CD14-positive monocyte (primary cell): ENCODE measurements at regions of chr19 and their contacts with region 1.

Region 1: GRCh38 chr19:2061495-2062381 is 10.7 kb upstream of the MKNK2 start:
- DNase-seq: peak; percentile 98 to 99 (median 98)
- H3K4me3 ChIP-seq: peak overlapping the region; percentile 54 to 77 (median 74)
- H3K4me3 Mint-ChIP-seq: peak overlapping the region; percentile 82 to 90
- H3K27ac ChIP-seq: peak overlapping the region; percentile 63 to 92
- H3K27ac Mint-ChIP-seq: peak overlapping the region; percentile 88 to 98 (median 94)
- H3K4me1 ChIP-seq: peaks cover 36 to 40% of the 10 kb centered on the region in 2 donors
- H3K4me1 Mint-ChIP-seq: peaks cover 27% of the 10 kb centered on the region
- H3K27me3 ChIP-seq: no peaks in the 10 kb centered on the region
- H3K27me3 Mint-ChIP-seq: peaks cover 0 to 1% (median 0%) of the 10 kb centered on the region in 3 donors
- CTCF ChIP-seq: no peak

Region 2: DNA sequence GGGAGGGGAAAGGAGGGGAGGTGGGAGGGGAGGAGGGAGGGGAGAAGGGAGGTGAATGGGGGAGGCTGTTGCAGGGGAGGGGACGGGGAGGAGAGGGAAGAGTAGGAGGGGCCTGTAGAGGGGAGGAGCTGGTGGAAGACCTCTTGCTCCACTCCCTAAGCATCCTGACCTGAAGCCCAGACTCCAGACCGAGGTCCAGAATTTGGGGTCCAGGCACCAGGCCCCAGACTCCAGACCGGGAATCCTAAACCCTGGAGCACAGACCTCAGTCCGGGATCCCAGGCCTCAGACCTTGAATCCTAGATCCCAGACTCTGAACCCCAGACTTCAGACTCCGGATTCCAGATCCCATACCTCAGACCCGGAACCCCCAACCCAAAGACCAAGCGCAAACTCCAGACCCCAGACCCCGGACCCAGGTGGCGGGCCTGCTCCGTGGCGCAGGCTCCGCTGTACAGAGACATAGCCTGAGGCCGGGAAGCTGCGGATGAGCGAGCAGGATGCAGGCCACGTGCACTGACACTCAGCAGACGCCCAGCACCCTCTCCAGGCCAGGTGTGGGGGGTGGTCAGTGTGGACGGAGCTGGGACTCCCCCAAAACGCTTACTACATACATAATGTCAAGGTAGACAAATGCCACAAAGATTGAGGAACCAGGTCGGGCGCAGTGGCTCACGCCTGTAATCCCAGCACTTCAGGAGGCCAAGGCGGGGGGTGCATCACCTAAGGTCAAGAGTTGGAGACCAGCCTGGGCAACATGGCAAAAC is 45.5 kb before region 1 on chr19:
- intact Hi-C with region 1: loop called in 1 of 2 experiments (anchors 5 kb)
- DNase-seq: peak; percentile 12 to 46 (median 36)
- H3K4me3 ChIP-seq: peak overlapping the region in 1 of 3 experiments; percentile 55
- H3K4me3 Mint-ChIP-seq: peak overlapping the region; percentile 46 to 48
- H3K27ac ChIP-seq: no peak overlapping the region
- H3K27ac Mint-ChIP-seq: peak overlapping the region in 2 of 7 donors; percentile 66 to 76
- H3K4me1 ChIP-seq: peaks cover 15 to 22% of the 10 kb centered on the region in 2 donors
- H3K4me1 Mint-ChIP-seq: peaks cover 18% of the 10 kb centered on the region
- H3K27me3 ChIP-seq: no peaks in the 10 kb centered on the region
- H3K27me3 Mint-ChIP-seq: peaks cover 0 to 3% (median 0%) of the 10 kb centered on the region in 3 donors
- CTCF ChIP-seq: no peak

Region 3: GRCh38 chr19:2032296-2032941 is 29.3 kb before region 1 on chr19:
- intact Hi-C with region 1: loop called in 1 of 2 experiments (anchors 5 kb)
- DNase-seq: peak; percentile 74 to 81 (median 78)
- H3K4me3 ChIP-seq: peak overlapping the region; percentile 20 to 65 (median 28)
- H3K4me3 Mint-ChIP-seq: peak overlapping the region; percentile 74 to 95
- H3K27ac ChIP-seq: peak overlapping the region; percentile 45 to 72
- H3K27ac Mint-ChIP-seq: peak overlapping the region; percentile 86 to 98 (median 95)
- H3K4me1 ChIP-seq: peaks cover 39 to 57% of the 10 kb centered on the region in 2 donors
- H3K4me1 Mint-ChIP-seq: peaks cover 41% of the 10 kb centered on the region
- H3K27me3 ChIP-seq: no peaks in the 10 kb centered on the region
- H3K27me3 Mint-ChIP-seq: peaks cover 2 to 5% (median 3%) of the 10 kb centered on the region in 3 donors
- CTCF ChIP-seq: no peak

Region 4: GRCh38 chr19:2168619-2169424 is 107.1 kb after region 1 on chr19:
- intact Hi-C with region 1: no loop called
- DNase-seq: peak; percentile 99 to 100 (median 99)
- H3K4me3 ChIP-seq: peak overlapping the region; percentile 4 to 70 (median 31)
- H3K4me3 Mint-ChIP-seq: peak overlapping the region; percentile 75 to 83
- H3K27ac ChIP-seq: peak overlapping the region; percentile 99
- H3K27ac Mint-ChIP-seq: peak overlapping the region; percentile 99 to 100 (median 100)
- H3K4me1 ChIP-seq: peaks cover 45 to 51% of the 10 kb centered on the region in 2 donors
- H3K4me1 Mint-ChIP-seq: peaks cover 61% of the 10 kb centered on the region
- H3K27me3 ChIP-seq: no peaks in the 10 kb centered on the region
- H3K27me3 Mint-ChIP-seq: peaks cover 0 to 3% (median 0%) of the 10 kb centered on the region in 3 donors
- CTCF ChIP-seq: no peak